ENCODE measurements at regions of chr2 and their contacts with region 1.

Region 1: GRCh38 chr2:119234377-119235019 is 10.9 kb downstream of the STEAP3 start:
- DNase-seq: peak in 1 of 2 experiments; percentile 70
- H3K4me3 ChIP-seq: no peak overlapping the region
- H3K27ac ChIP-seq: no peak overlapping the region
- H3K4me1 ChIP-seq: peaks cover 11 to 29% (median 17%) of the 10 kb centered on the region in 4 experiments
- H3K27me3 ChIP-seq: no peaks in the 10 kb centered on the region
- CTCF ChIP-seq: peak; percentile 33 to 61 (median 47)
- EP300 ChIP-seq: no peak
- POLR2A ChIP-seq: no peak
- RAD21 ChIP-seq: peak; percentile 28 to 47

Region 2: GRCh38 chr2:119223521-119224390 is 10.7 kb before region 1 on chr2 and contains the start of gene STEAP3:
- CTCF ChIA-PET with region 1: interaction called, 20 read pairs
- POLR2A ChIA-PET with region 1: interaction called, 5 read pairs
- DNase-seq: peak; percentile 65 to 84
- H3K4me3 ChIP-seq: peak within 1 kb of the TSS; percentile 59 to 74 (median 62)
- H3K27ac ChIP-seq: no peak within 1 kb of the TSS
- H3K4me1 ChIP-seq: peaks cover 2 to 21% (median 9%) of the 10 kb centered on the region in 4 experiments
- H3K27me3 ChIP-seq: peaks cover 0 to 12% (median 6%) of the 10 kb centered on the region in 4 experiments; a peak in 5 of 7 replicates
- CTCF ChIP-seq: no peak; a peak in 1 of 4 replicates
- EP300 ChIP-seq: no peak; a peak in 1 of 3 replicates
- POLR2A ChIP-seq: peak in 1 of 2 experiments; percentile 45; a peak in 1 of 3 replicates
- RAD21 ChIP-seq: no peak
- total RNA-seq, gene STEAP3: 21.7 and 22.2 TPM in 2 replicates

Region 3: GRCh38 chr2:119255760-119256581 is 21.5 kb after region 1 on chr2:
- CTCF ChIA-PET with region 1: interaction called, 20 read pairs
- POLR2A ChIA-PET with region 1: no interaction called
- DNase-seq: no peak
- H3K4me3 ChIP-seq: peak overlapping the region in 1 of 4 experiments; percentile 29; a peak in 1 of 8 replicates
- H3K27ac ChIP-seq: peak overlapping the region; percentile 46; the same call in 1 of the 2 replicates
- H3K4me1 ChIP-seq: peaks cover 17 to 35% (median 26%) of the 10 kb centered on the region in 4 experiments
- H3K27me3 ChIP-seq: no peaks in the 10 kb centered on the region
- CTCF ChIP-seq: no peak
- EP300 ChIP-seq: peak in 1 of 2 experiments; percentile 52; a peak in 1 of 3 replicates
- POLR2A ChIP-seq: no peak
- RAD21 ChIP-seq: no peak

Region 4: DNA sequence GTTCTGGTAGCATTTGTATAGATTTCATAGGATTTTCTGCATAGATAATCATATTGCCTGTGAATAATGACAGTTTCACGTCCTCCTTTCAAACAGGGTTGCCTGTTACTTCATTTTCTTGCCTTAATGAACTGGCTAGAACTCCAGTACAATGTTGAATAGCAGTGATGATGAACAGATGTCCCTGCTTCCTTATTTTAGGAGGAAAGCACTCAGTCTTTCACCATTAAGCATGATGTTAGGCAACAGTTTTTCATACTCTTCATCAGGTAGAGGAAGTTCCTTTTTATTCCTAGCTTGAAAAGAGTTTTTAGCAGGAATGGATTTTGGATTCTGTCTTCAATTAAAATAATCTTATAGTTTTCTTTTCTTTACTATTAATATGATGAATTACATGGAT is 92.4 kb after region 1 on chr2:
- CTCF ChIA-PET with region 1: no interaction called
- POLR2A ChIA-PET with region 1: no interaction called
- DNase-seq: no peak
- H3K4me3 ChIP-seq: no peak overlapping the region
- H3K27ac ChIP-seq: no peak overlapping the region
- H3K4me1 ChIP-seq: no peaks in the 10 kb centered on the region
- H3K27me3 ChIP-seq: no peaks in the 10 kb centered on the region
- CTCF ChIP-seq: no peak
- EP300 ChIP-seq: no peak
- POLR2A ChIP-seq: no peak
- RAD21 ChIP-seq: no peak